MCF 10A (cell line): ENCODE measurements at regions of chr1 and their contacts with region 1.

Region 1: GRCh38 chr1:168439456-168440375 is 104.1 kb downstream of the XCL2 start:
- DNase-seq: peak; percentile 91
- H3K4me3 Mint-ChIP-seq: no peak overlapping the region
- H3K27ac Mint-ChIP-seq: no peak overlapping the region
- H3K4me1 Mint-ChIP-seq: peaks cover 22% of the 10 kb centered on the region
- H3K27me3 Mint-ChIP-seq: peaks cover 4% of the 10 kb centered on the region
- CTCF ChIP-seq: peak; percentile 91

Region 2: GRCh38 chr1:168421399-168422004 is 18.2 kb before region 1 on chr1:
- CTCF ChIA-PET with region 1: interaction called, 19 read pairs
- POLR2A ChIA-PET with region 1: interaction called, 4 read pairs
- intact Hi-C with region 1: no loop called
- DNase-seq: no peak
- H3K4me3 Mint-ChIP-seq: no peak overlapping the region
- H3K27ac Mint-ChIP-seq: no peak overlapping the region
- H3K4me1 Mint-ChIP-seq: no peaks in the 10 kb centered on the region
- H3K27me3 Mint-ChIP-seq: peaks cover 9% of the 10 kb centered on the region
- CTCF ChIP-seq: no peak

Region 3: GRCh38 chr1:168452329-168452728 is 12.6 kb after region 1 on chr1:
- CTCF ChIA-PET with region 1: interaction called, 19 read pairs
- POLR2A ChIA-PET with region 1: interaction called, 3 read pairs
- intact Hi-C with region 1: no loop called
- DNase-seq: no peak
- H3K4me3 Mint-ChIP-seq: no peak overlapping the region
- H3K27ac Mint-ChIP-seq: no peak overlapping the region
- H3K4me1 Mint-ChIP-seq: peaks cover 14% of the 10 kb centered on the region
- H3K27me3 Mint-ChIP-seq: peaks cover 10% of the 10 kb centered on the region
- CTCF ChIP-seq: peak; percentile 22

Region 4: GRCh38 chr1:168567007-168567406 is 127.3 kb after region 1 on chr1:
- CTCF ChIA-PET with region 1: interaction called, 20 read pairs
- POLR2A ChIA-PET with region 1: no interaction called
- intact Hi-C with region 1: no loop called
- DNase-seq: no peak
- H3K4me3 Mint-ChIP-seq: no peak overlapping the region
- H3K27ac Mint-ChIP-seq: no peak overlapping the region
- H3K4me1 Mint-ChIP-seq: no peaks in the 10 kb centered on the region
- H3K27me3 Mint-ChIP-seq: peaks cover 51% of the 10 kb centered on the region
- CTCF ChIP-seq: no peak

Region 5: GRCh38 chr1:168585191-168585590 is 145.5 kb after region 1 on chr1:
- CTCF ChIA-PET with region 1: interaction called, 22 read pairs
- POLR2A ChIA-PET with region 1: interaction called, 3 read pairs
- intact Hi-C with region 1: no loop called
- DNase-seq: peak; percentile 49
- H3K4me3 Mint-ChIP-seq: no peak overlapping the region
- H3K27ac Mint-ChIP-seq: no peak overlapping the region
- H3K4me1 Mint-ChIP-seq: peaks cover 12% of the 10 kb centered on the region
- H3K27me3 Mint-ChIP-seq: no peaks in the 10 kb centered on the region
- CTCF ChIP-seq: no peak

Region 6: GRCh38 chr1:168960595-168960994 is 520.9 kb after region 1 on chr1:
- CTCF ChIA-PET with region 1: no interaction called
- POLR2A ChIA-PET with region 1: no interaction called
- intact Hi-C with region 1: no loop called
- DNase-seq: no peak
- H3K4me3 Mint-ChIP-seq: no peak overlapping the region
- H3K27ac Mint-ChIP-seq: no peak overlapping the region
- H3K4me1 Mint-ChIP-seq: peaks cover 5% of the 10 kb centered on the region
- H3K27me3 Mint-ChIP-seq: peaks cover 11% of the 10 kb centered on the region
- CTCF ChIP-seq: no peak

Region 7: GRCh38 chr1:169240449-169241237 is 800.9 kb after region 1 on chr1:
- CTCF ChIA-PET with region 1: no interaction called
- POLR2A ChIA-PET with region 1: no interaction called
- intact Hi-C with region 1: no loop called
- DNase-seq: no peak
- H3K4me3 Mint-ChIP-seq: peak overlapping the region; percentile 28
- H3K27ac Mint-ChIP-seq: no peak overlapping the region
- H3K4me1 Mint-ChIP-seq: peaks cover 5% of the 10 kb centered on the region
- H3K27me3 Mint-ChIP-seq: no peaks in the 10 kb centered on the region
- CTCF ChIP-seq: no peak